ENCODE measurements at regions of chr6 and their contacts with region 1.

Region 1: DNA sequence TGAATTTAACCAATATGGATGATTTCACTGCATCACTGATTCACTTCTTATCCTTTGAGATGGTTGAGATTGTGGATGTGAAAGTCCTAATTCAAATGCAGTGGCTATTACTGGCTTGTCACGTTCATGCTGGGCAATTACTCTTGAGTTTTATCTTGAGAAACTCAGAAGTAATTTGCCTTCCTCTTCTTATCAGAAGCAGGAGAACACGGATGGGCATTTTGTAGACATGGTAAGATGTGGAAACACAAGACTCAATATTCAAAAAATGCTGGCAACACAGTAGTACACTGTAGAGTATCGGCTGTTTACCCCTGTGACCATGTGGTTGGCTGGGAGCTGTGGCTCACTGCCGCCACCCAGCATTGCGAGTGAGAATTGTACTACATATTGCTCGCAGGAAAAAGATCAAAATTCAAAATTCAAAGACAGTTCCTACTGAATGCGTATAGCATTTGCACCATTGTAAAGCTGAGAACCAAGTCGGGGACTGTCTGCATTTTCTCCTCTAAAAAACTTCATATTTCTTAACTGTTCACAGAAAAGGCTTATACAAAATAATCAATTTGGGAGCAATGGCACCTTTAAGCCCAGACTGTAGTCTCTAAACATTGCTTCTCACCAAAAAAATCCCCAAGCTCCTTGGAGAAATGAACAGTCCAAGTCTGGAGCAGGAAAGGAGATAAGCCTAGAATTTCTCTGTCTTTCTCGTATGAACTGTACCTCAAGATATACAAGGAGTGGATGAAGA is 61.9 kb upstream of the ELOVL5 start:
- DNase-seq: peak; percentile 45
- H3K4me3 Mint-ChIP-seq: no peak overlapping the region
- H3K27ac Mint-ChIP-seq: no peak overlapping the region
- H3K4me1 Mint-ChIP-seq: no peaks in the 10 kb centered on the region
- H3K27me3 Mint-ChIP-seq: no peaks in the 10 kb centered on the region
- CTCF ChIP-seq: peak; percentile 50

Region 2: DNA sequence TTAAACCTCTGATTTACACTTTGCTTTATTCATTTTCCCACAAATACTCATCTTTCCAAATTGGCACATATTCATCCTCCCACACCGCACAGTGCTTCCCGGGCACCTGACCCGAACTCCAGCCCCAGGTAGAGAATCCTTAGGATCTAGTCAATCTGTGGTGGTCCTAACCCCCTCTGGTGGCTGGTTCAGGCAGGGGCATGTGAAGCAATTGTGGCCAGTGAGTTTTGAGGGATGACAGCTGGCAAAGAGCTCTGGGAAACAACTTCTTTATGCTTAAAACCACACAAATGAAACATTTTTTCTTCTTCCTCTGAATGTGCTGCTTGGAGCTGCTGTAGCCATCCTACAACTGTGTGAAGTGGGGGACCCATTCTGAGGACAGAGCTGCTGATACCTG is 116.6 kb before region 1 on chr6:
- CTCF ChIA-PET with region 1: no interaction called
- intact Hi-C with region 1: loop called (anchors 10 kb)
- DNase-seq: peak; percentile 3
- H3K4me3 Mint-ChIP-seq: no peak overlapping the region
- H3K27ac Mint-ChIP-seq: no peak overlapping the region
- H3K4me1 Mint-ChIP-seq: peaks cover 28% of the 10 kb centered on the region
- H3K27me3 Mint-ChIP-seq: no peaks in the 10 kb centered on the region
- CTCF ChIP-seq: peak; percentile 38

Region 3: DNA sequence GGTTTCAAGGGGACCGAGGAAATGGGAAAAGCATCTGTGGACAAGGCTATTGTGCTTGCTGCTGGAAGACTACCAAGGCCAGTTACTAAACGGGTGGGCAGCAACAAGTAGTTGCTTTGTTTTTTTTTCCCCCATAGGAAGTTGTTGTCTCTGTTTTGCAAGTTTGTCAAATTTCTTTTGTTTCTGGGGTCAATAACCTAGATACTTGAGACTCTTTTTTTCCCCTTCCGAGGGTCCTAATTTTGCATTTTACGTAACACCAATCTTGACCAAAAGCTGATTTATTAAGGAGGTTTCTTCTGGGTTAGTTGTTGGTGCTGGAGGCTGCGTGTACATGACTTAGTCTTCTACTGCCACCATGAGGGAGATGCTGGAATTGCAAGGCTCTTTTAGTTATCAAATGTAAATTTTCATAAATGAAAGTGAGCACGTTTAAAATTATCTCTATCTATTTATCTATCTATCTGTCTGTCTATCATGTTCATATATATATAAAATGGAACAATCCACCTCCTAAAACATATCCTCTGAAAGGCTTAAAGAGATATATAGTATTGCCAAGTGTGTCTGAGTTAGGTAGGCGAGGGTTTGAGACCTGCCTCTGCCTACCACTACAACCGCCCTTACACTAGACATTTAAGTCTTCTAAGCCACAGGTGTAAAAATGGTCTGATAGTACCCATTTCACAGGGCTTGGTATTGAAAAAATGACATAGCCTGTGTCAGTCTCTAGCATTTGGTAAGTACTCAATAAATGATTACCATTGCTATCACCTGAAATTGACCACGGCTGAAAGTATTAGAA is 74.0 kb after region 1 on chr6:
- CTCF ChIA-PET with region 1: no interaction called
- intact Hi-C with region 1: no loop called
- DNase-seq: peak; percentile 64
- H3K4me3 Mint-ChIP-seq: no peak overlapping the region
- H3K27ac Mint-ChIP-seq: no peak overlapping the region
- H3K4me1 Mint-ChIP-seq: no peaks in the 10 kb centered on the region
- H3K27me3 Mint-ChIP-seq: no peaks in the 10 kb centered on the region
- CTCF ChIP-seq: peak; percentile 71

Measured in Calu3 (cell line).